ENCODE measurements at regions of chr4 and their contacts with region 1.

Region 1: GRCh38 chr4:173420324-173420752 is 21.4 kb upstream of the SCRG1 start:
- DNase-seq: peak in 2 of 4 donors; percentile 24 to 26
- ATAC-seq: peak; percentile 51
- H3K4me3 ChIP-seq: no peak overlapping the region
- H3K27ac ChIP-seq: no peak overlapping the region
- H3K4me1 ChIP-seq: peaks cover 0 to 27% of the 10 kb centered on the region in 2 donors
- H3K27me3 ChIP-seq: no peaks in the 10 kb centered on the region
- CTCF ChIP-seq: peak; percentile 28 to 35

Region 2: DNA sequence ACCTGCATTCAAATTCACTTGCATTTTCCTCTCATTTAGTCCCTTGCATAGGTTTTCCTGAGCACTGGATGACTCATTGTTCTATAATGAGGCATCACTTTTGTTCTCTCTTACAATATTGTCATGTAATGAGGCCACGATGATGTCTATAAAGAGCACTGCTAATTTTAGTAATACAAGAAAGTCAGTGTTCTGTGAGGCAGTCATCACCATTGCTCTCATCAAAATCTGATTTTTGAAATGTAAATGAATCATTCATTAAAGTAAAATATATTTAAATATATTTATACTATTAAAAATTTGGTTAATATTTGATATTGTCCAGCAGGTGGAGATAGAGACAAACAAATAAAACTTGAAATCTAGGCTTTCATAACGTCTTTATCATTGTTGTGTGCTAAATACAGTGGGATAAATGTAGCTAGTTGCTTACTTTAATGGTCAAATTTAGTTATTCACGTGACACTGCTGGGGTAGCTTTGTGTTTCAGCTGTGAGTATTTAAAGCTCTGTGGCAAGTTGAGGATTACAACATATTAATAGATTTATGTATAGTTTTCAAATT is 101.6 kb before region 1 on chr4:
- intact Hi-C with region 1: loop called (anchors 2 to 10 kb)
- DNase-seq: peak in 1 of 4 donors; percentile 39
- ATAC-seq: peak; percentile 79
- H3K4me3 ChIP-seq: no peak overlapping the region
- H3K27ac ChIP-seq: no peak overlapping the region
- H3K4me1 ChIP-seq: peaks cover 0 to 13% of the 10 kb centered on the region in 2 donors
- H3K27me3 ChIP-seq: no peaks in the 10 kb centered on the region
- CTCF ChIP-seq: peak in 1 of 2 donors; percentile 29

Region 3: GRCh38 chr4:173478201-173478912 is 58.0 kb after region 1 on chr4:
- intact Hi-C with region 1: no loop called
- DNase-seq: no peak
- ATAC-seq: no peak
- H3K4me3 ChIP-seq: no peak overlapping the region
- H3K27ac ChIP-seq: no peak overlapping the region
- H3K4me1 ChIP-seq: no peaks in the 10 kb centered on the region
- H3K27me3 ChIP-seq: no peaks in the 10 kb centered on the region
- CTCF ChIP-seq: no peak

Region 4: DNA sequence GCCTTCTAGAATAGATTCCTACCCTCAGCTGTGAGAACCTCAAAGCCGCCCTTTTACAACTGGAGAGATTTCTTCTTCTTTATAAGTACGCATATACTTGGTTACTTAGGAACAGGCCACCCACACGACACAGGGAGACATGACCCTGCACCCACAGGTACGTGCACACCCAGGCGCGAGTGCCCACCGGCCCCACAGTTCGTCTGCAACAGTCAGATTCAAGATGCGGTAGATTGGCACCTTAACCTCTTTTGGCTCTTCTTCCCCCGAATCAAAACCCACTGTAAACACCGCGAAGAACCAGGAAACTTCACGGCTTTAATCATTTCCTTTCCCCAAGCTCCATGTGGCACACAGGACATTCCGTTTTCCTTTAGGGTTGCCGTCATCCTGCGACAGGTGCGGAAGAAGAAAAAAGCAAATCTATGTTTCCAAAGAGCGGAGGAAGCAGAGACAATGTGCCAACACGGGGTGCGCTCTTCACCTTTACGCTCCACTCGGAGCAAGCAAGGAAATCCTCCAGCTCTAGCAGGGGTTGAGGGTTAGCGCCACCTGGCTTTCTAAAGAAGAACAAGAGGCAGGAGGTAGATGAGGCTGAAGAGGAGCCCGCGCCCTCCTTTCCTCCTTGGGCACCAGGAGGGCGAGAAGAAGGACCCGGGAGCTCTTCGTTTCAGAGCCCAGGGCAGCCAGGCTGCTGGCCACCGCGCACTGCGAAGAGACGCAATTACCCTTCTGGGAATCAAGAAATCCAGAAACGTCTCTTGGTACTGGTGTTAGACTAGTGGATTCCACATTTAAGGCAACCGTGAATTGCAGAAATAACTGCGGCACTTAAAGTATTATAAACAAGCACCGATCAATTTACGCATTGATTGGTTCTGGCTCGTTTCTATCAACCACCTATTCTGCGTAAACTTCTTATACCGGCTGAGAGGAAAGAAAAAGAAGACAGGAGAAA is 74.0 kb after region 1 on chr4:
- intact Hi-C with region 1: loop called in 1 of 2 experiments (anchors 10 kb)
- DNase-seq: peak in 3 of 4 donors; percentile 58 to 70 (median 65)
- ATAC-seq: peak; percentile 96
- H3K4me3 ChIP-seq: peak overlapping the region; percentile 10 to 17
- H3K27ac ChIP-seq: no peak overlapping the region
- H3K4me1 ChIP-seq: peaks cover 10 to 18% of the 10 kb centered on the region in 2 donors
- H3K27me3 ChIP-seq: peaks cover 24 to 62% of the 10 kb centered on the region in 2 donors
- CTCF ChIP-seq: peak; percentile 62